Astrocyte of the cerebellum (primary cell): ENCODE measurements at regions of chr1 and their contacts with region 1.

Region 1: GRCh38 chr1:247456914-247457639 is 827 bp downstream of the OR2B11 start:
- DNase-seq: no peak
- H3K4me3 ChIP-seq: no peak overlapping the region
- CTCF ChIP-seq: no peak

Region 2: GRCh38 chr1:247401310-247402119 is 55.6 kb before region 1 on chr1:
- in situ Hi-C with region 1: loop called (anchors 5 kb)
- DNase-seq: no peak
- H3K4me3 ChIP-seq: no peak overlapping the region
- CTCF ChIP-seq: no peak

Region 3: DNA sequence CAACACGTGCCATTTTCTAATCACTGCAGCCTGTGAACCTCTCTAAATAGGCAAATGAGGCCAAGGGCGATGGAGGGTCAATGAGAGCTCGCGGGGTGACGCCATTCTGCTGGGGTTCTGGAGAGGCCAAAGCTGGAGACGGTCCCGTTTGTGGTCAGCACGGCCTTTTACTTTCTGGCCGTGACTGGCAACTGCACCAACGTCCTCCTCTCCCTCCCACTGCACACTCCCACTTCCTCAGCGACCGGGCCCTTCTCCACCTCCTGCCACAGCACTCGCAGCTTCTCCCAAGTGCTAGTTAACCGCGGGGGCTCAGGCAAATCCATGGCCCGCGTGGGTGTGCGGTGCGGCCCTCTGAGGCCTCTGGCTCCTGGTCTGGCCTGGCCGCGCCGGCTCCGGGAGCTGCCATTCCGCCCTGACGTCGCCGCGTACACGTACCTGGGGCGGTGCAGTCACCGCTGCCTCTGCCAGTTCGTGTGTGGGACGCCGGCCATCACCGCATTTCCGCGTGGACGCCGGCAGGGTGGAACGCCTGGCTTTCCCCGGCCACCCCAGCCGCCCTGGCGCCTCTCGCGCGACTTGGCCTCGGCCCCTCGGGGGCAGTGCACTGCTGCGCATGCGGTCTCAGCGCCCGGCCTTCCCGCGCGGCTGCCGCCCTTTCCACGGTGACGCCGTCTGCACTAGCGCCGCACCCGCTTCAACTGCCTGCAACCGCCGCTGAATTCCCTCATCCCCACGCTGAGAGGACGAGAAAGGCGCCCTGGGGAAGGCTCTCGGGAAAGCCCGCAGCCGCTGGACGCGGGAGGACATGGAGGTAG is 60.9 kb after region 1 on chr1:
- in situ Hi-C with region 1: no loop called
- DNase-seq: no peak
- H3K4me3 ChIP-seq: no peak overlapping the region
- CTCF ChIP-seq: no peak